Heart right ventricle (tissue), 16 donors: ENCODE measurements at regions of chr17 and their contacts with region 1.

Region 1: DNA sequence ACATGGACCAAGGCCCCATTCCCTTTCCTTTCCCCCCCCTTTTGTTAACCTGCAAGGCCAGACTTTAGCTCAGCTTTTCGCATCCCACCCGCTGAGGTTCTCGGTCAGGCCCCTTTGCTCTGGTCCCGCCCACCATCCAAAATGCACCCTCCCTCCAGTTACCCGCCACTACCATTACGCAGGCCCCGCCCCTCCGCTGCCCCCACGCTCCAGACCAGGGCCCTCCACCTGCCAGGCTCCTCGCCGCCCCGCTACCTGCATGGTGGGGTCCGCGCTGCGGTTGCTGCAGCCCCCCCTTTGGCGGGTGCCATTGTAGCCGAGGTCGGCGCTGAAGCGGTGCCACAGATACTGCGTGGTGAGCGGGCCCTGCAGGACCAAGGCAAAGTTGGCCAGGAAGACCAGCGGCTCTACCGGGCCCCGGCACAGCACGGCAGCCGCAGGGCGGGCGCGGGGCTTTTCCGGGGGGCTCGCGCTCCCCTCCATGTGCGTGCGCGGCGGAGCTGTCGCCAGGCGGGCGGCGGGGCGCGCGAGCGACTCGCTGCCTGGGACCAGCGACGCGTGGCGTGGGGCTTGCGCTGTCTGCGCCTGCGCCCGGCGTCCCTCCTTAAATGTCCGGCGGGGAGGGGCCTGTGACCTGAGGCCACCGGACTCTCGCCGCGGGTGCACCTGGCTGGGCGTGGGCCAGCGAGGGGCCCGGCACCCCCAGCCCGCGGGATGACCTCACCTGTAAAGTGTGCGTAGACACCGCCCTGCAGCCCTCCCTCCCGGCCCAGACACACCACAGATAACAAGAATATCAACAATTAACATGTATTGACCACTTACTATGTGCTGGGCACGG is at the start of gene SLC46A1:
- DNase-seq: peak; percentile 61 to 70
- ATAC-seq: peak; percentile 72 to 88 (median 81)
- H3K4me3 ChIP-seq: peak within 1 kb of the TSS; percentile 54 to 80 (median 70)
- H3K27ac ChIP-seq: peak within 1 kb of the TSS in 8 of 10 donors; percentile 30 to 77 (median 40)
- H3K4me1 ChIP-seq: peaks cover 0 to 54% (median 16%) of the 10 kb centered on the region in 9 donors
- H3K27me3 ChIP-seq: peaks cover 0 to 4% (median 0%) of the 10 kb centered on the region in 7 donors
- CTCF ChIP-seq: no peak
- total RNA-seq, gene SLC46A1: 3.6 to 10.2 (median 4.9) TPM

Region 2: DNA sequence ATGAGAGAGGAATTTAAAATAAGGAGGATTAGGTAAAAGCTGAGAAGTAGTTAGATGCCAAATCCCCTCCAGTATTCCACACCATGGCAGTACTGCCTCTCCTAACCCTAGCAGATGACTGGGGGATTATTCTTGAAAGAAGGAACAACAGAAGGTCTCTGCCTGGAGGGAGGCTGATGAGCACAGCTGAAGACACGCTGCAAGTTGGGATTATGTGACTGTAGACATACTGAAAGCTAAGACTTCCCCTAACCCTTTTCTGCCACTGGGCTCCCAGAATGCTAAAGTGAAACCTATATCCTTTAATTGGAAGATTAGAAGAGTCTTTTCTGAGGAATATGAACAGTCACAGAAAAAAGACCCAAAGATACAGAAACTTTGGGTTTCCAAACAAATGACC is 27.9 kb after region 1 on chr17:
- intact Hi-C with region 1: no loop called
- DNase-seq: no peak
- ATAC-seq: no peak
- H3K4me3 ChIP-seq: no peak overlapping the region
- H3K27ac ChIP-seq: no peak overlapping the region
- H3K4me1 ChIP-seq: no peaks in the 10 kb centered on the region
- H3K27me3 ChIP-seq: peaks cover 0 to 34% (median 4%) of the 10 kb centered on the region in 7 donors
- CTCF ChIP-seq: no peak

Region 3: GRCh38 chr17:28467456-28468025 is 61.7 kb after region 1 on chr17:
- intact Hi-C with region 1: loop called in 1 of 10 experiments (anchors 10 kb)
- DNase-seq: no peak
- ATAC-seq: no peak
- H3K4me3 ChIP-seq: no peak overlapping the region
- H3K27ac ChIP-seq: no peak overlapping the region
- H3K4me1 ChIP-seq: peaks cover 0 to 26% (median 0%) of the 10 kb centered on the region in 9 donors
- H3K27me3 ChIP-seq: peaks cover 0 to 37% (median 19%) of the 10 kb centered on the region in 7 donors
- CTCF ChIP-seq: no peak

Region 4: DNA sequence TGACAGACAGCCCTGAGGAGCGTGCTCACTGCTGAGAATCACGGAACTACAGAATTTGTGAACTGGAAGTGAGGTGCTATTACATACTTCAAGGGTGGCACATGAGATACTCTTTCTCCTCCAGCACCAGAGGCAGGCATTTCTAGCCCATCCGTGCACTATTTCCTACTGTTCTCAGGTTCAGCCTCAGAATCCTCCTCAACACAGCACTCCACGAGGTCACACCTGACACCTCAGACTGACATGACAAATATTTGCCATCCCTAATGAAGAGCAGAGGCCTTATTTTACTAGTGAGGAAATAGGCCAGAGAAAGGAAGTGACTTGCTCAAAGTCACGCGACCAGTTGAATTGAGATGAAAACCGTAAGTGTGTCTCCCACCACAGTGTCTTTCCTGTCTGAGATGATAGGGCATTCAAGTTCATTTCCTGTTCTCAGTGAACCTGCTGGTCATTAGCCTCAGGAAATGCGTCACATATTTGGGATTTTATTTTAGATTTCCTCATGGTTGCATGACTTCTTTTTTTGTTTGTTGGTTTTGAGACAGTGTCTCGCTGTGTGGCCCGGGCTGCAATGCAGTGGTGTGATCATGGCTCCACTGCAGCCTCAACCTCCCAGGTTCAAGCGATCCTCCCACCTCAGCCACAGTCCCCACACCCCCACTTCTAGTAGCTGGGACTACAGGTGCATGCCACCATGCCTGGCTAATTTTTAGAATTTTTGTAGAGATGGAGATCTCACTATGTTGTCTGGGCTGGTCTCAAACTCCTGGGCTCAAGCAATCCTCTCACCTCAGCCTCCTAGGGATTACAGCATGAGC is 576.5 kb after region 1 on chr17:
- intact Hi-C with region 1: no loop called
- DNase-seq: peak in 1 of 2 donors; percentile 43
- ATAC-seq: peak; percentile 29 to 92 (median 81)
- H3K4me3 ChIP-seq: no peak overlapping the region
- H3K27ac ChIP-seq: peak overlapping the region in 7 of 10 donors; percentile 28 to 81 (median 71)
- H3K4me1 ChIP-seq: peaks cover 0 to 29% (median 17%) of the 10 kb centered on the region in 9 donors
- H3K27me3 ChIP-seq: peaks cover 0 to 15% (median 5%) of the 10 kb centered on the region in 7 donors
- CTCF ChIP-seq: no peak